H1 (cell line): ENCODE measurements at regions of chr20 and their contacts with region 1.

Region 1: DNA sequence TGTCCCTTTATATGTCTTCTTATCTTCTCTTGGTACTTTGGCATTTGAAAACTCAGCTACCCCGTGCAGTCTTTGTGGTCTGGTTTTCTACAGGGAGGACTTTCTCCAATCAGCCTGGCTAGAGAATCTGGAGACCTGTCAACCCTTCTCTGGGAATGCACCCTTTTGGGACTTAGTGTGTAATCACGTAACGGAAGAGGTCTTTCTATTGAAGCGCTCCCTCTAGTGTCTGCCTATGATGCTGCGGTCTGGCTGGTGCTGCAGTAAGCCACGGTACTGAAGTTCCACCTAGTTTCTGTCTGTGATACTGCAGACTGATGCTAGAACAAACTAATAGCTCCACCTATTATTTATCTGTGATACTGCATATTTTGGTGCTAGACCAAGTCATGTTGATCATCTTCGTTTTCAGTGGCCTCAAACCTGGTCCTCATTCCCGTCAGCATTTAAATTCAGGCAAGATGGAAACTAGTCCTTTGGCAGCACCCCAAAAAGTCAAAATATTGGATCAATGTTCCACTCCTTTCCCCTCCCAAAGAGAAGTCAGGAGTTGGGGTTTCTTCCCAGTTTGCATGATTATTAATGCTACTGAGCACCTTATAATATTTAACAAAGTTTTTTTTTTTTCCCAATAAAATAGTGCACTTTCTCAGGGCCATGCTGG is 12.5 kb upstream of the SIRPB2 start:
- DNase-seq: peak; percentile 77 to 82
- H3K4me3 ChIP-seq: no peak overlapping the region
- H3K27ac ChIP-seq: no peak overlapping the region
- H3K4me1 ChIP-seq: peaks cover 6 to 8% (median 8%) of the 10 kb centered on the region in 4 experiments; a peak in 6 of 7 replicates
- H3K27me3 ChIP-seq: no peaks in the 10 kb centered on the region; a peak in 1 of 7 replicates
- CTCF ChIP-seq: peak; percentile 87 to 100 (median 100)
- EP300 ChIP-seq: peak in 1 of 2 experiments; percentile 34; a peak in 1 of 3 replicates
- POLR2A ChIP-seq: no peak
- RAD21 ChIP-seq: peak; percentile 85 to 92

Region 2: GRCh38 chr20:1450926-1451491 is 52.7 kb before region 1 on chr20:
- CTCF ChIA-PET with region 1: interaction called, 15 read pairs
- POLR2A ChIA-PET with region 1: interaction called, 3 read pairs
- DNase-seq: no peak
- H3K4me3 ChIP-seq: 0 out of 8 replicates have a peak overlapping the region, but pooled peaks of 1 of the 4 experiments have one; percentile 6
- H3K27ac ChIP-seq: no peak overlapping the region
- H3K4me1 ChIP-seq: no peaks in the 10 kb centered on the region
- H3K27me3 ChIP-seq: no peaks in the 10 kb centered on the region
- CTCF ChIP-seq: no peak
- EP300 ChIP-seq: no peak
- POLR2A ChIP-seq: no peak
- RAD21 ChIP-seq: no peak

Region 3: GRCh38 chr20:1474825-1475603 is 28.7 kb before region 1 on chr20:
- CTCF ChIA-PET with region 1: interaction called, 63 read pairs
- POLR2A ChIA-PET with region 1: no interaction called
- DNase-seq: no peak
- H3K4me3 ChIP-seq: no peak overlapping the region
- H3K27ac ChIP-seq: no peak overlapping the region
- H3K4me1 ChIP-seq: 0 out of 7 replicates have a peak, but pooled peaks cover 0 to 3% (median 0%) of the 10 kb centered on the region in 4 experiments
- H3K27me3 ChIP-seq: no peaks in the 10 kb centered on the region
- CTCF ChIP-seq: peak in 2 of 3 experiments; percentile 32 to 40; a peak in 2 of 4 replicates
- EP300 ChIP-seq: no peak
- POLR2A ChIP-seq: no peak
- RAD21 ChIP-seq: peak; percentile 32 to 46; a peak in 3 of 4 replicates

Region 4: DNA sequence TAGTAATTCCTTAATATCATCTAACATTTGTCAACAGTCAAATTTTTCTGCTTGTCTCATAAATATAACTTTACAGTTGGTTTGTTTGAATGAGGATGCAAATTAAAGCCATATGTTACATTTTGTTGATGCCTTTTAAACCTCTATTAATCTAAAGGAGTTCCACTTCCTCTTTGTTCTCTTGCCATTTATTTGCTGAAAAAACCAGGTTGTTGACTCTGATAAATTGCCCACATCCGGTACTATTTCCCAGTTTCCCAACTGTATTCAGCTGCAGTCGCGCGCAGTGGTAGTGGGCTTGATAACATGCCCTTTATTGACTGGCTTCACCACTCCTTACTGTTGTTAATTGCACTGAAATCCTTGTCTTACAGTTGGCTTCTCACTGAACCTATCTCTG is 20.3 kb after region 1 on chr20:
- CTCF ChIA-PET with region 1: interaction called, 10 read pairs
- POLR2A ChIA-PET with region 1: no interaction called
- DNase-seq: no peak
- H3K4me3 ChIP-seq: no peak overlapping the region
- H3K27ac ChIP-seq: no peak overlapping the region
- H3K4me1 ChIP-seq: no peaks in the 10 kb centered on the region; a peak in 2 of 7 replicates
- H3K27me3 ChIP-seq: peaks cover 0 to 3% (median 0%) of the 10 kb centered on the region in 4 experiments; a peak in 1 of 7 replicates
- CTCF ChIP-seq: no peak
- EP300 ChIP-seq: no peak
- POLR2A ChIP-seq: no peak
- RAD21 ChIP-seq: no peak

Region 5: GRCh38 chr20:1588533-1589460 is 85.1 kb after region 1 on chr20:
- CTCF ChIA-PET with region 1: no interaction called
- POLR2A ChIA-PET with region 1: no interaction called
- DNase-seq: no peak
- H3K4me3 ChIP-seq: no peak overlapping the region
- H3K27ac ChIP-seq: no peak overlapping the region
- H3K4me1 ChIP-seq: no peaks in the 10 kb centered on the region
- H3K27me3 ChIP-seq: no peaks in the 10 kb centered on the region
- CTCF ChIP-seq: peak in 1 of 3 experiments; percentile 31; a peak in 1 of 4 replicates
- EP300 ChIP-seq: no peak
- POLR2A ChIP-seq: no peak
- RAD21 ChIP-seq: peak; percentile 30 to 40; a peak in 3 of 4 replicates

Region 6: DNA sequence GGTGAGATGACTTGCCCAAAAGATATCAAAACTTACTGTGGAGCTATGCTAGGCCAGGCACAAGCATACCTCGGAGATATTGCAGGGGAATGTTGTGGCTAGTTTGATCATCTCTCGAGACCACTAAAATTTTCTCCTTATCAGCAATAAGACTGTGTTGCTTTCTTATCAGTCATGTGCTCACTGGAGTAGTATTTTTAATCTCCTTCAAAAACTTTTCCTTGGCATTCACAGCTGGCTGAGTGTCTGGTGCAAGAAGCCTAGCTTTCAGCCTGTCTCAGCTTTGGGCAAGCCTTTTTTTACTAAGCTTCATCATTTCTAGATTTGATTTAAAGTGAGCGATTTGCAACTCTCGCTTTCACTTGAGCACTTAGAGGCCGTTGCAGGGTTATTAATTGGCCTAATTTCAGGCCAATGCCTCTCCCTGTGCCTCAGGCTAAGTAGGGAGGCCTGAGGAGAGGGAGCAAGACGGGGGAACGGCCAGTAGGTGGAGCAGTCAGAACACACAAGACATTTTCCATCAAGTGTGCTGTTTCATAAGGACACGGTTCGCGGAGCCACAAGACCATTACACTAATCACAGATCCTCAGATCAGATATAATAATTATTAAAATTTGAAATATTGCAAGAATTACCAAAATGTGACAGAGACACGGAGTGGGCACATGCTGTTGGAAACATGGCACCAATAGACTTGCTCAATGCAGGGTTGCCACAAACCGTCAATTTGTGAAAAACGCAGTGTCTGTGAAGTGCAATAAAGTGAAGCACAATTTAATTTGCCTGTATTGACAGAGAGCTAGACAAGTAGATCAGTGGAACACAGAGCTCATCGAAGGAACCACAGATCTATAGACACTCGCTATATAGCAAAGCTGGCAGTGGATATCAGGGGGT is 260.7 kb after region 1 on chr20:
- CTCF ChIA-PET with region 1: interaction called, 11 read pairs
- POLR2A ChIA-PET with region 1: no interaction called
- DNase-seq: peak; percentile 69 to 73
- H3K4me3 ChIP-seq: no peak overlapping the region
- H3K27ac ChIP-seq: no peak overlapping the region
- H3K4me1 ChIP-seq: no peaks in the 10 kb centered on the region
- H3K27me3 ChIP-seq: peaks cover 0 to 6% (median 0%) of the 10 kb centered on the region in 4 experiments; a peak in 2 of 7 replicates
- CTCF ChIP-seq: peak; percentile 80 to 95 (median 92)
- EP300 ChIP-seq: no peak
- POLR2A ChIP-seq: no peak
- RAD21 ChIP-seq: peak; percentile 86 to 88